ENCODE measurements at regions of chrX and their contacts with region 1.

Region 1: DNA sequence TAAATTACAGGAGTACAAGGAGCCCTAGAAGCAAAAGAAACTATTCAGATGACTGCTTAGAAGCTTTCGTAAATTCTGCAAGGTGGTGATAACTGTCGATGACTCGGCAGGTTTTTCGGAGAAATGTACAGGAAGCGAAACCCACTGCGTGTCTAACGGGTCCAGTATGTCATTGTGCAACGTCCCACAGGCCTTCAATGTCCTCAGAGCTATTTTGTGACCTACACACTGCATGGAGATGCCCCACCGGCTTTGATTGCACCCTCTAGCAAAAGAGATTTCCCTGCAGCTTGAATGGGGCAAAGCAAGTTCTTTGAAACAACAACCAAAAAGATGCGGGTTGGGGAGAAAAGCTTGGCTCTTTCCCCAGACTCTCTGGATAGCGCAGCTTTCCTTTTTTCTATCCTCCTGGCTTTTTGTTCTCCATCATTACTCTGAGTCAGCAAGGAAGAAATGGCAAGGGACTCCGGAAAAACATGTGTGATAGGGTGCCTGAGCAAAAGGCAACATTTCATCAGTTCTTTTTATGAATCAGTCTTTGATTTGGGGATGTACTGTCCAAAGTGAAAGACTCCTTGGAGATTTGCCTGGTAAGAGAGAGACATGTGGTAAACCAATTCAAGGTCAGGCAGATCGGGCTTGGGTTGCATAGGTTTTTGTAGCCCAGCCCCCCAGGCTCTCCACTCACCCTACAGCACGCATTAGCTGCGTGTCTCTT is 112.0 kb upstream of the TBL1X start:
- DNase-seq: peak; percentile 77
- H3K4me3 Mint-ChIP-seq: peak overlapping the region; percentile 61
- H3K27ac Mint-ChIP-seq: peak overlapping the region; percentile 98
- H3K4me1 Mint-ChIP-seq: peaks cover 62% of the 10 kb centered on the region
- H3K27me3 Mint-ChIP-seq: no peaks in the 10 kb centered on the region

Region 2: DNA sequence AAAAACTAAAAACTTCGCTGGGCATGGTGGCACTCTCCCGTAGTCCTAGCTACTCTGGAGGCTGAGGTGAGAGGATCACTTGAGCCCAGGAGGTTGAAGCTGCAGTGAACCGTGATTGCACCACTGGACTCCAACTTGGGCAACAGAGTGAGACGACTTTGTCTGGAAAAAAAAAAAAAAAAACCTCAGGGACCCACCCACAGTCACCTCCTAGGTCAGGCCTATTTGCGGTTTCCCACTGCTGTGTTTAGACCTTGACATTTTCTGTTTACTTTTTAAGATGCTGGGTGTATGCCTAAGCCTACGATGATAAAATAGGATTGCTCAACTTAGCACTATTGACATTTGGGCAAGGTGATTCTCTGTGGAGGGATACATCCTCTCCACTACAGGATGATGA is 85.4 kb before region 1 on chrX:
- CTCF ChIA-PET with region 1: no interaction called
- POLR2A ChIA-PET with region 1: no interaction called
- DNase-seq: no peak
- H3K4me3 Mint-ChIP-seq: no peak overlapping the region
- H3K27ac Mint-ChIP-seq: no peak overlapping the region
- H3K4me1 Mint-ChIP-seq: peaks cover 2% of the 10 kb centered on the region
- H3K27me3 Mint-ChIP-seq: no peaks in the 10 kb centered on the region

Region 3: DNA sequence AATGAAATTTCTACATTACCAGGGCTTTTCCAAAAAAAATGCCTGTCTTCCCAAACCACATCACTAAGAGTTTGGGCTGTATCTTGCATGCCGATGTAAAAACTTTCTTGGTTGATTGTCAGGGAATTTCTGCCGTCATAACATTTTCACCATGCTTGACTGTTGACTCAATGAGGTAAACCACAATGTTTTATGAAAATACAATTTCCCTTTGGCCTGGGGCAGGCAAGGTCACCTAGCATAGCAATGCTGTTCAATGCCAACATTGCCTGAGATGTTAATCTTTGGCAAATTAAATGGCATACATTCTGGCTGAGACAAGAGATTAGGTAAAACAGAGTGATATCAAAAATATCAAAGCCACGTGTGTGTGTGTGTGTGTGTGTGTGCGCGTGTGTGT is 25.1 kb before region 1 on chrX:
- CTCF ChIA-PET with region 1: no interaction called
- POLR2A ChIA-PET with region 1: no interaction called
- DNase-seq: no peak
- H3K4me3 Mint-ChIP-seq: no peak overlapping the region
- H3K27ac Mint-ChIP-seq: no peak overlapping the region
- H3K4me1 Mint-ChIP-seq: peaks cover 15% of the 10 kb centered on the region
- H3K27me3 Mint-ChIP-seq: peaks cover 1% of the 10 kb centered on the region

Region 4: DNA sequence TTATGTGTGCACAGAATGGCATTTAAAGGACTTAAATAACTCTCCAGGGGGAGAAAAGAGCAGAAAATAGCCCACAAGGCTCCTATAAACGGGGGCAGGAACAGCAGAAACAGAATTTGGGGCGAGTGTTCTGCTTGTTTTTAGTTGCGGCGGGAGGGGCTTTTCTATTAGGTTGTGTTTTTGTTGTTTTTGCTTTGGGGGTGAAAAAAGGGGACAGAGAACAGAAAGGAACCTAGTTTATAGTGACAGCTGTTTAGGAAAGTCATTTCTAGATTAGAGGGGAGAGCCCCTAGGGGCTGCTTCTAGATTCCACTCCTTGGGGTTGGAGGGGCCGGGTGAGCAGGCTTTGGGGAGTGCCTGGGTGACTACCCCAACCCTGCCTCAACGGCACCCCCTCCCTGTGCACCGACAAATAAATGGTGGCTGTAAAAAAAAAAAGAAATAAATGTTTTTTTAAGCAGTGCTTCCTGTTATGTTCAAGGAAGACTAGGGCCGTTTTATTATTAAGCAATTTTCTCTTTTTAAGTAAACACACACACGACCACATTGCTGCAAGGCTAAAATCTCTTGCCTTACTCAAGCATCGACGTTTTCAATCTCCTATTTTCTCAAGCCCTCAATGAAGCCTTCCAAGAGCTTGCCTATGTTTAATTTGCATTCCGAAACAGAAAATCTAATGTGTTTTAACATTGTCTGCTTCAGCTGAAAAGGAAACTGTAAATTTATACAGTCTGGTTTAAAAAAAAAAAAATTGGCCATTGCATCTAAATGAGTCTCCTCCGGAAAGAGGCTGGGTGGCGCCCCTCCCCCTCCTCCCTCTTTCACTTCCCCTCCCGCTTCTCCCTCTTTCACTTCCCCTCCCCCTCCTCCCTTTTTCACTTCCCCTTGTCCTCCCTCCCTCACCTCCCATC is 11.3 kb before region 1 on chrX:
- CTCF ChIA-PET with region 1: interaction called, 13 read pairs
- POLR2A ChIA-PET with region 1: interaction called, 39 read pairs
- DNase-seq: peak; percentile 76
- H3K4me3 Mint-ChIP-seq: peak overlapping the region; percentile 69
- H3K27ac Mint-ChIP-seq: peak overlapping the region; percentile 92
- H3K4me1 Mint-ChIP-seq: peaks cover 38% of the 10 kb centered on the region
- H3K27me3 Mint-ChIP-seq: no peaks in the 10 kb centered on the region

Region 5: DNA sequence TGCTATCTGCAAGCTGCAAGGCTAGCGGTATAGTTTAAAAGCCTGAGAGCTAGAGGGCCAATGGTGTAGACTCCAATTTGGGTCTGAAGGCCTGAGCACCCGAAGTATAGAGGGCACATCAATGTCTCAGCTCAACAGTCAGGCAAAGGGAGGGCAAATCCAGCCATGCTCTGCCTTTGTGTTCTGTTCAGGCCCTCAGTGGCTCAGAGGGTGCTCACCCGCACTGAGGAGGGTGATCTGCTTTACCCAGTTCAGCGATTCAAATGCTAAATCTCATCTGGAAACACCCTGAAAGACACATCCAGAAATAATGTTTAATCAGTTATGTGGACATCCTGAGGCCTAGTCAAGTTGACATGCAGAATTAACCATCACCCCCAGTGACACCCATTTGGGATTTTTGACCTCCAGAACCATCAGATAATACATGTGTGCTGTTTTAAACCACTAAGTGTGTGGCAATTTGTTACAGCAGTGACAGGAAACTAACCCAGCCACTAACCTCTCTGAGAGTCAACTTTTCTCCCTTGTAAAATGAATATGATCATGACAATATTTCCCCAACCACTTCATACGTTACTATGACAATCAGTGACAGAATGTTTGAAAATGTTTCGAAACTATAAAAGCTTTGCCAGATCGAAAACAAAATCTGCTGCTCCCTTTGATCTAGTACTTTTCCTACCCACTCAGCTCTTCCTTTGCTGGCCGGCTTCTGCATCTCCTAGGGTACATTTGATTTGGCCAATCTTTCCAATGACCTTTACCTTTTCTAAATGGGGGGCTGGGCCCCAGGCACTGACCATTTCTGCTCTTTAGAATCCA is 103.6 kb after region 1 on chrX:
- CTCF ChIA-PET with region 1: no interaction called
- POLR2A ChIA-PET with region 1: interaction called, 75 read pairs
- DNase-seq: peak; percentile 25
- H3K4me3 Mint-ChIP-seq: peak overlapping the region; percentile 8
- H3K27ac Mint-ChIP-seq: peak overlapping the region; percentile 92
- H3K4me1 Mint-ChIP-seq: peaks cover 26% of the 10 kb centered on the region
- H3K27me3 Mint-ChIP-seq: no peaks in the 10 kb centered on the region

Region 6: DNA sequence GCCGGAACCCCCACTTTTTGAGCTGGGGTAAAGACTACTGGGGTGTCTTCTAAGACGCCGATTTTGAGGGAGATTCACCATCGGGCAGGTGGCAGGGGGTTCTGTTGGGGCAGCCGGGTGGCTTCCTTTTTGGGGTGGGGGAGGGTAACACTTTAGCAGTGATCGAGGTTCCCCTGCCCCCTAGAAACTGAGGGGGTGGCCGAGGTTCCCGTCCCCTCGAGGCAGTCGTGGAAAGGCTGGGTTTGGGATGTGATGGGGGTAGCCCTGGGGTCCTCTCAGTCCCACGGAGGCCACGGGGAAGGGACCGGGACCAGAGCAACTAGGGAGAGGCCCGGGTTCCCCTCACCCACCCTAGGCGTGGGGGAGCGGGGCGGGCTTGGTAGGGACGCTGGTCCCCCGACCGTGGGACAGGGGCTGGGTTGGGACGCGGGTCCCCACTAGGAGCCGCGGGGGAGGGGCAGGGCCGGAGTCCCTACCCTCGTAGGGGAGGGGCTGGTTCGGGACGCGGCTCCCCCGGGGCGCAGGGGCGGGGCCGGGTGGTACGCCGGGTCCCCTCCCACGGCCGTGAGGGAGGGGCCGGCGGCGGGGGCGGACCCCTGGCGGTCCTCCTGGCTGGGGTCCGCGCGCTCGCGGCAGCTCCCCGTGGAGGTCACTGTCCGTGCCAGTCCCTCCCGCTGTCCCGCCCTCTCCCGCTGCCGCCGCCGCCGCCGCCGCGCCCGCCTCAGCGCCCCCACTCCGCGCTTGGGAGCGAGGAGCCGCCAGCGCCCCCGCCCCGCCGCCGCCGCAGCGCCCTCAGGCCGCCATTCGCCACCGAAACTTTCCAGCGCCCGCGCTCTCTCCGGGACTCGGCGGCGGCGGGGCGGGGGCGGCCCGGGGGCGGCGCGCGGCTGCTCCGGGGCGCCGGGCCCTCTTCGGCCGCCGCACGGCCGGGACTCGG is 111.8 kb after region 1 on chrX and contains the start of gene TBL1X:
- CTCF ChIA-PET with region 1: interaction called, 13 read pairs
- POLR2A ChIA-PET with region 1: interaction called, 75 read pairs
- DNase-seq: peak; percentile 64
- H3K4me3 Mint-ChIP-seq: peak within 1 kb of the TSS; percentile 74
- H3K27ac Mint-ChIP-seq: peak within 1 kb of the TSS; percentile 81
- H3K4me1 Mint-ChIP-seq: peaks cover 45% of the 10 kb centered on the region
- H3K27me3 Mint-ChIP-seq: no peaks in the 10 kb centered on the region
- total RNA-seq, gene TBL1X: 39.5 to 44.0 TPM

Measured in activated CD4-positive, alpha-beta memory T cell treated with anti-CD3 and anti-CD28 coated beads, Interleukin-2, amount 10 ng/mL, durations not matched to agents 7 days and 5 days (primary cell).